Vagina (tissue), 2 donors: ENCODE measurements at regions of chr19 and their contacts with region 1.

Region 1: DNA sequence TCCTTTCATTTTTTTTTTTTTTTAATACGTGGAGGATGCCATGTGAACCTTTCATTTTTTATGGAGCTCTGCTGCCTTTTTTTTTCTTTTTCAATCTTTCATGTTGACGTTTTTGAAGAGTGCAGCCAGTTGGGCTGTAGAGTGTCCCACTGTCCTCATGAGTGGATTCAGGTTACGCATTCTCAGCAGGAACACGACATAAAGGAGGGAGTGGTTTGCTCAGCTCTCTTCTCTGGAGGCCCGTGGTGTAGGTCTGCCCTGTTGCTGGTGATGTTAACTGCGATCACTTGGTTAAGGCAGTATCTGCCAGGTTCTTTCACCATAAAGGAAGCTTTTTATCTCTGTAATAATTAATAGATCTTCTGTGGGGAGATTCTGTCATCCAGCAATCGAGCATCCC is 26.7 kb upstream of the CACNG8 start:
- DNase-seq: no peak
- H3K4me3 ChIP-seq: no peak overlapping the region
- H3K27ac ChIP-seq: no peak overlapping the region
- H3K4me1 ChIP-seq: no peaks in the 10 kb centered on the region
- H3K27me3 ChIP-seq: no peaks in the 10 kb centered on the region
- CTCF ChIP-seq: no peak
- POLR2A ChIP-seq: no peak

Region 2: DNA sequence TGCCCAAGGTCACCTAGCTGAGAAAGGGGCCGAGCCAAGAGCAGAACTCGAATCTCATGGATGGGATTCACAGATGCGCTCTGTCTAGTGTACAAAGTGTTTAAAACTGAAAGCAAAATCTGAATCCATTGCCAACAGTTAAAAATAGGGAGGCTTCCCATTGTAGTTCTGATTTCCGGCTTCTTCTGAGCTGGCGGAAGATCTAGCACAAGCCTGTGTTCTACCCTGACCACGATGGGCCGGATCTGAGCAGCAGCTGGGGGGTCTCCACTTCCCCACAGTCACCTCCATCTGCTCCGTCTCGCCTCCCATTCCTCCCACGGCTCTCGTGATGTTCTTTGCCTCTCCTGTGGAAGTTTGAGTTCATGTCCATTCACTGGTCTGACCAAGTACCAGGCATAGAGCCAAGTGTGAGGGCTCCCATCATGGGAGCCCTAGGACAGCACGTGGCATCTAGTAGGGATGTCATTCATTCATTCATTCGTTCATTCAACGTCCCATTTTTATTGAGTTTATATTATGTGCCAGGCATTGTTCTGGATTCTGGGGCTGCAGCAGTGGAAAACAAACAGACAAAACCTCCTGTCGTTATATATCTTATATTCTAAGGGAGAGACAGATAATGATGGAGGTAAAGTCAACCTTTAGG is 29.2 kb after region 1 on chr19:
- intact Hi-C with region 1: loop called (anchors 1 kb)
- DNase-seq: no peak
- H3K4me3 ChIP-seq: no peak overlapping the region
- H3K27ac ChIP-seq: no peak overlapping the region
- H3K4me1 ChIP-seq: no peaks in the 10 kb centered on the region
- H3K27me3 ChIP-seq: peaks cover 4% of the 10 kb centered on the region
- CTCF ChIP-seq: no peak
- POLR2A ChIP-seq: no peak

Region 3: GRCh38 chr19:55580628-55581144 is 1644.7 kb after region 1 on chr19 and contains the start of gene ZNF579:
- intact Hi-C with region 1: no loop called
- DNase-seq: no peak
- H3K4me3 ChIP-seq: peak within 1 kb of the TSS; percentile 96
- H3K27ac ChIP-seq: peak within 1 kb of the TSS; percentile 96
- H3K4me1 ChIP-seq: peaks cover 27% of the 10 kb centered on the region
- H3K27me3 ChIP-seq: no peaks in the 10 kb centered on the region
- CTCF ChIP-seq: no peak
- POLR2A ChIP-seq: no peak
- total RNA-seq, gene ZNF579: 3.2 TPM